ENCODE measurements at regions of chr9 and their contacts with region 1.

Region 1: DNA sequence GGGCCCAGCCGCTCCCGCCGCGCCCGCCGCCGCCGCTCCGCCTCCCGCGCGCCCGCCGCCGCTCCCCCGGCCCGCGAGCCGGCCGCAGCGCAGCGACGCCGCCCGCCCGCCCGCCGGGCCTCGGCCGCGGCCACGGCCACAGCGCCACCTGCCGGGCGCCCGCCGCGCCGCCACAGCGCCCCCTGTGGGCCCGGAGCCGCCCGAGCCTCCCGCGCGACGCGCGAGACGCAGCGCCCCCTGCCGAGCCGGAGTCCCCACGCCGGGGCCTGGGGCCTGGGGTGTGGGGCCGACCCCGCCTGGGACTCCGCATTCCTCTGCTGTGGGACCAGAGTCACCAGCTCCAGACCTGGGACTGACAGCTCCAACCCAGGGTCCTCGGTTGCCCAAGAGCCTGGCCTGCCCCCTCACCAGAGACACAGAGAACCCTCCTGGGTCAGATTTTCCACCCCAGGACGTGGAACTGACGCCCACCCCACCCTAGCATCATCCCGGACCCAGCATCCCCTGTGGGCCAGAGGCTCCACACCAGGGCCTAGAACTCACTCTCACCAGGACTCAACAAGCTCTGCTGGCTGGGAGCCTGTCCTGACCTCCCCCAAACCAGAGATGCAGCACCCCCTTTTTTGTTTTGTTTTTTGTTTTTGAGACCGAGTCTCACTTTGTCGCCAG is at the start of gene RAPGEF1:
- DNase-seq: peak; percentile 76
- ATAC-seq: peak; percentile 79
- H3K4me3 Mint-ChIP-seq: peak within 1 kb of the TSS; percentile 98
- H3K27ac Mint-ChIP-seq: peak within 1 kb of the TSS; percentile 94
- H3K4me1 Mint-ChIP-seq: peaks cover 60% of the 10 kb centered on the region
- H3K27me3 Mint-ChIP-seq: no peaks in the 10 kb centered on the region
- CTCF ChIP-seq: peak; percentile 94
- total RNA-seq, gene RAPGEF1: 84.5 to 85.2 TPM

Region 2: GRCh38 chr9:131253891-131254491 is 486.1 kb before region 1 on chr9:
- CTCF ChIA-PET with region 1: no interaction called
- POLR2A ChIA-PET with region 1: no interaction called
- intact Hi-C with region 1: loop called (anchors 10 kb)
- DNase-seq: no peak
- ATAC-seq: no peak
- H3K4me3 Mint-ChIP-seq: peak overlapping the region; percentile 30
- H3K27ac Mint-ChIP-seq: peak overlapping the region; percentile 90
- H3K4me1 Mint-ChIP-seq: peaks cover 51% of the 10 kb centered on the region
- H3K27me3 Mint-ChIP-seq: no peaks in the 10 kb centered on the region
- CTCF ChIP-seq: no peak

Region 3: DNA sequence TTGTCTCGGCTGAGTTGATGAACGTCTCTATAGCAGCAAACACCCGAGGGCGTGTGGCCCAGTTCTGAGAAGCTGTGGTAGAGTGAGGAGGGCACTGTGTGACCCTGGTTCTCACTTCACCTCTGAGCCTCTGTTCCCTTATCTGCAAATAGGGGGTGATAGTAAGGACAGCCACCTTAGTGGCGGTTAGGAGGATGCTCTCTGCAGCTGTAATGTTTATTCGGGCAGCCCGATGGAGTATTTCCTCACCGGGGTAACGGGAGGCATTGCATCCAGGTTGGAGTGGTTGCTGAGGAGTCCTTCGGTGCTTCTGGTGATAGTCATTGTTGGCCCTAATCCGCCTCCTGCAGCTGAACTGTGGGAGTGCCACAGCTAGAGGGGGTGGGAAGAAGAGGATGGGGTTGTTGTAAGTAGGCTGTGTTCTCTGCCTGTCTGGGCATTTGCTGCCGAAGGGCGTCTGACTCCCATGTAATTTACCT is 332.4 kb before region 1 on chr9:
- CTCF ChIA-PET with region 1: no interaction called
- POLR2A ChIA-PET with region 1: no interaction called
- intact Hi-C with region 1: no loop called
- DNase-seq: peak; percentile 61
- ATAC-seq: peak; percentile 45
- H3K4me3 Mint-ChIP-seq: peak overlapping the region; percentile 60
- H3K27ac Mint-ChIP-seq: peak overlapping the region; percentile 79
- H3K4me1 Mint-ChIP-seq: peaks cover 91% of the 10 kb centered on the region
- H3K27me3 Mint-ChIP-seq: no peaks in the 10 kb centered on the region
- CTCF ChIP-seq: peak; percentile 54

Region 4: GRCh38 chr9:131605770-131606590 is 134.1 kb before region 1 on chr9:
- CTCF ChIA-PET with region 1: interaction called, 15 read pairs
- POLR2A ChIA-PET with region 1: interaction called, 3 read pairs
- intact Hi-C with region 1: no loop called
- DNase-seq: no peak
- ATAC-seq: no peak
- H3K4me3 Mint-ChIP-seq: no peak overlapping the region
- H3K27ac Mint-ChIP-seq: no peak overlapping the region
- H3K4me1 Mint-ChIP-seq: no peaks in the 10 kb centered on the region
- H3K27me3 Mint-ChIP-seq: no peaks in the 10 kb centered on the region
- CTCF ChIP-seq: no peak

Region 5: GRCh38 chr9:131641618-131642495 is 98.3 kb before region 1 on chr9:
- CTCF ChIA-PET with region 1: interaction called, 10 read pairs
- POLR2A ChIA-PET with region 1: interaction called, 6 read pairs
- intact Hi-C with region 1: no loop called
- DNase-seq: no peak
- ATAC-seq: no peak
- H3K4me3 Mint-ChIP-seq: no peak overlapping the region
- H3K27ac Mint-ChIP-seq: peak overlapping the region; percentile 96
- H3K4me1 Mint-ChIP-seq: peaks cover 49% of the 10 kb centered on the region
- H3K27me3 Mint-ChIP-seq: no peaks in the 10 kb centered on the region
- CTCF ChIP-seq: no peak

Region 6: DNA sequence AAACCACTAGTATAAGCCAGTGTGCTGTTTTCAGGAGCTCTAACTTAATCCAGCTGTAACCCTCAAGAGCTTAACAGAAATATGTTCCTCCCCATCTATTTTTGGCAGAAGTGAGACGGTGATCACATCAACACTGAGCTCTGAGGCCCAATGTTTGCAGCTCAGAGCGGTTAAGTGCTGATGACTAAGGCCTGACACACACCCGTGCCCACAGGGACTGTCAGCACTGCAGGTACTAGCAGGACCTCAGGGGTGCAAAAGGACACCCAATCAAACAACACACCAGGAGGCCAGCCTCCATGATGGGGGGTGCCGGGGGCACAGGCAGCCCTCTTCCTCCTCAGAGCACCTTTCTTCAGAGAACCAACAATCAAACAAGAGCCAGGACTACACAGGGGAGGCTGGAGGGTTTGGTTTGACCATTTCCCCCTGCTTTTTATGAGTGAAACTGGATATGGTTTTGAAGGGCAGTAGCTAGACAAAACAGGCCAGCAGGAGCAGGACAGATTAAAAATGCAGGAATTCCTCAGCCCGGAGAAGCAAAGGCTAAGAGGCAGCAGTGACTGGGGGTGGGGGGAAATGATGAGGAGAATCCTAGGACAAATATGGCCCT is 61.5 kb before region 1 on chr9:
- CTCF ChIA-PET with region 1: interaction called, 32 read pairs
- POLR2A ChIA-PET with region 1: interaction called, 20 read pairs
- intact Hi-C with region 1: no loop called
- DNase-seq: peak; percentile 94
- ATAC-seq: peak; percentile 99
- H3K4me3 Mint-ChIP-seq: peak overlapping the region; percentile 64
- H3K27ac Mint-ChIP-seq: peak overlapping the region; percentile 94
- H3K4me1 Mint-ChIP-seq: peaks cover 82% of the 10 kb centered on the region
- H3K27me3 Mint-ChIP-seq: no peaks in the 10 kb centered on the region
- CTCF ChIP-seq: no peak

Region 7: DNA sequence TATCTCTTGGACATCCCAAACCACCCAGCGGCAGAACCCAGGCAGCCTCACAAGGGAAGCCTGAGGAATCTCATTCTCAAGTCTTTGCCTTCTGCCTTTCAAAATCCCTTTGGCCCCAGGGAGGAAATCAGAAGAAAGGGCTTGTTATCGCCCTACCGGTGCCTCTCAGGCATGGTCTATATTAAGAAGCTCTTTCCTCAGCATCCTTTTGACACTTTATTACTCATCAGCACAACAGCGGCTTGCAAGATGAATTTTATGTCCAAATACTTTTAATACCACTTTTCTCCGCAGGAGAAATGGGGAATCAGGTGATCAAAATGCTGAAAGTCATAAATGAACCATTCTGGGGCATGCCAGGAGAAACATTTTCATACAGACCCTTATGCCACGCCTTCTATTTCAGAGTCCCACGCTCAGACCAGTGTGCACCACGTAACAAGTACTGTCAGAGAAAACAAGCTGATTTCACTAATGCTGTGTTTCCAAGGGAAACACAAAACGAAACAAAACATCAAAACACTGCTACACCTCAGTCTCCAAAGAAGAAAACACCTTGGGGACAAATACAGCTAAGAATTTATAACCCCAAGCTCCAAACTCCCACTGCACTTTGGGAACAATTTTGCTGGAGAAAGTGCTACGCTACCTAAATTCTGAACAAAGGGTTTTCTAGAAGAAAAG is 30.2 kb before region 1 on chr9:
- CTCF ChIA-PET with region 1: interaction called, 15 read pairs
- POLR2A ChIA-PET with region 1: interaction called, 119 read pairs
- intact Hi-C with region 1: no loop called
- DNase-seq: peak; percentile 60
- ATAC-seq: peak; percentile 76
- H3K4me3 Mint-ChIP-seq: peak overlapping the region; percentile 42
- H3K27ac Mint-ChIP-seq: peak overlapping the region; percentile 90
- H3K4me1 Mint-ChIP-seq: peaks cover 72% of the 10 kb centered on the region
- H3K27me3 Mint-ChIP-seq: no peaks in the 10 kb centered on the region
- CTCF ChIP-seq: no peak

Region 8: GRCh38 chr9:131762356-131762932 is 22.3 kb after region 1 on chr9:
- CTCF ChIA-PET with region 1: interaction called, 16 read pairs
- POLR2A ChIA-PET with region 1: no interaction called
- intact Hi-C with region 1: no loop called
- DNase-seq: peak; percentile 79
- ATAC-seq: peak; percentile 90
- H3K4me3 Mint-ChIP-seq: no peak overlapping the region
- H3K27ac Mint-ChIP-seq: no peak overlapping the region
- H3K4me1 Mint-ChIP-seq: peaks cover 11% of the 10 kb centered on the region
- H3K27me3 Mint-ChIP-seq: peaks cover 10% of the 10 kb centered on the region
- CTCF ChIP-seq: peak; percentile 97

Measured in activated CD8-positive, alpha-beta T cell treated with anti-CD3 and anti-CD28 coated beads for 36 hours (primary cell).